HEK293T (cell line): ENCODE measurements at regions of chr14 and their contacts with region 1.

Region 1: GRCh38 chr14:75577729-75578101 is 705 bp upstream of the FLVCR2 start:
- DNase-seq: peak; percentile 85

Region 2: GRCh38 chr14:75560962-75561432 is 16.7 kb before region 1 on chr14:
- CTCF ChIA-PET with region 1: interaction called, 27 read pairs
- POLR2A ChIA-PET with region 1: interaction called, 4 read pairs
- DNase-seq: peak; percentile 87

Region 3: GRCh38 chr14:75591331-75591946 is 13.7 kb after region 1 on chr14:
- CTCF ChIA-PET with region 1: no interaction called
- POLR2A ChIA-PET with region 1: no interaction called
- DNase-seq: no peak

Region 4: DNA sequence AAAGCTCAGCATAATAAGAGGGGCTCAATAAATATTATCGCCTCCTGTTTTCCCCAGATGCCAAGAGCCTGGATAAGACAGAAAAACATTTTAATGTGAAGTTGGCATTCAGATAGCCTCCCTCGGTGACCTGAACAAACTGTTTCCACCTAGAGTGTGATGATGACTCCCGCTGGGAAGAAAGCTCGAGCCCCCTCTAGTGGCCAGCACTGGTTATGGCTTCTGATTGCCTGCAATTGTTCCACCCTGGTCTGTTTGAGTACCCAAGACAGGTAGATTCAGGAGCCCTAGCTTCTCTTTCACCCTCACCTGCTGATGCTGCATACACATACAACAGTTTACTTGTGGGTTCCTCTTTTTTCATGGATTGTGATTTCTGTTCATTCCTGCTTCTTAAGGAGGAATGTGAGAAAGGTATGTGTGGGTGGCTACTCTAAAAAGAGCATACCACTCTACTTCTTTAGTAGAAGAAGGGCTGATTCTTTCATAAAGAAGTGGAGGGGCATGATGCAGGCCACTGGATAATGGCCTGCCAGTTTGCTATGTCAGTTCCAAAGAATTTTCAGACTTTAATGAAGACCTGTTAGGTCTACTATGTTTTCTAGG is 76.5 kb after region 1 on chr14:
- CTCF ChIA-PET with region 1: interaction called, 76 read pairs
- POLR2A ChIA-PET with region 1: interaction called, 11 read pairs
- DNase-seq: peak; percentile 79

Region 5: DNA sequence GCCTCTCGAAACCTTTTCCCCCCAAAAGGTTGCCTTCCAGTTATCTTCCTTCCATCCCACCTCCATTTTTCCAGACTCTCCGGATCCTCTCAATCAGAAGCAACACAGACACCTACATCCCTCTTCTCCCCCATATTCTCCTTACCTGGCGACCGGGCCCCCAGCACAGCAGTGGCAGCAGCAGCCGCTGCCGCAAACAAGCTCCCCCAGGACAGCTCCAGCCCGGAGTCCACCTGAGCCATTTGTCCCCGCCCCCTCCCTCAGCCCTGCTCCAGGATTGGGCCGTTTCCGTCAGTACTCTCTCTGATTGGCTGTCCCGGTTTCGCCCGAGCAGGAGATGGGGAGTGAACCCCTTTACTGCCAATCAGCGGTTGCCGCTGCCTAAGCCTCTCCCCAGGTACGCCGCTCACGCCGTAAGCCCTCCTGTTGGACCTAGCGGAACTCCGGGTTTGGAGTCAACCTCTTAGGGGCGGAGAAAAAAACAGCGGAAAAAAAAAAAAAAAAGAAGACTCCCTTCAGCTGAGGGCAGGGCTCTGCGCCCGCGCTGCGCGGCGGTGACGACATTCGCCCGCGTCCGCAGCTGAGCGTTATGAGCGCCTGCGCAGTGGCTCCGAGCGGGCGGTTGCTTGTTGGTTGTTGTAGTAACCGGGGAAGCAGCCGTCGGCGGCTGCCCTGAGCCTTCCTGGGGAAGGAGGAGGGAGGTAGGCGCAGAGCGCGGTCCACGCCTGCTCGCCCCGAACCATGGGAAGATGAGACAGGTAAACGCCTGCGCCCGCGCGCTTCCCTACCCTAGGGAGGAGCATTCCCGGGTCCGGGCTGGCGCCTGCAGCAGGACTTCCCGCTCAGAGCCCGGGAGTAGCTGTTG is 83.1 kb after region 1 on chr14 and contains the starts of genes ERG28 and TTLL5:
- CTCF ChIA-PET with region 1: interaction called, 76 read pairs
- POLR2A ChIA-PET with region 1: interaction called, 26 read pairs
- DNase-seq: peak; percentile 96

Region 6: DNA sequence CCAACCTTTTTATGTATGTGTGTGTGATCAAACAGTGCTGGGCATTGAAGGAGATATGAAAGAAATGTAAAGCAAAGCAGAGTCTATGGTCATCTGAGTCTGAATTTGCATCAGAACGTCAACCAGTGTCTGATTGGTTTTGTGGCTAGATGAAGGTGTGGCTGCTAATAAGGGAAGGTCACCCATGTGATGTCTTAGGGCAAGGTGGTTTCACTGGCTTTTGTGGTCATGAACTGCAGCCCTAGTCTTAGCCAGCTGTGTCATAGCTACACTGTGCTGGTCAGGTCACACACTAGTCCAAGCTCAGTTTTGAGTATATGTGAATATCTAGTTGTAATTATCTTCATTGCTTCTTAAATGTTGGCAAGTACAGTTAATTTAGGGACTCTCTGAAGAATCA is 298.2 kb after region 1 on chr14:
- CTCF ChIA-PET with region 1: no interaction called
- POLR2A ChIA-PET with region 1: no interaction called
- DNase-seq: no peak